AG04450 (cell line): ENCODE measurements at regions of chr1 and their contacts with region 1.

Region 1: DNA sequence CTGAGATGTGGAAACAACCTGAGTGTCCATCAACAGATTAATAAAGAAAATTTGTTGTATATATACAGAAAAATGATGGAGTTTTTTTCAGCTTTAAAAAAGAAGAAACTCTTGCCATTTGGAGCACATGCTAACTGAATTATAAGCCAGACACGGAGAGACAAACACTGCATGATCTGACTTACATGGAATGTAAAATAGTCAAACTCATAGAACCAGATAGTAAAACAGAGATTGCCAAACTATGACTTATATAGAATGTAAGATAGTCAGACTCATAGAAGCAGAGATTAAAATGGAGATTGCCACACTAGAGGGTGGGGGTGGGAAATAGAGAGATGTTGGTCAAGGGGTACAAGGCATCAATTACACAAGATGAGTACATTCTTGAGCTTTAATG is 1786.6 kb downstream of the PLA2G4A start:
- DNase-seq: peak; percentile 8
- H3K4me3 ChIP-seq: no peak overlapping the region
- H3K27ac ChIP-seq: no peak overlapping the region
- H3K27me3 ChIP-seq: no peaks in the 10 kb centered on the region
- CTCF ChIP-seq: no peak

Region 2: DNA sequence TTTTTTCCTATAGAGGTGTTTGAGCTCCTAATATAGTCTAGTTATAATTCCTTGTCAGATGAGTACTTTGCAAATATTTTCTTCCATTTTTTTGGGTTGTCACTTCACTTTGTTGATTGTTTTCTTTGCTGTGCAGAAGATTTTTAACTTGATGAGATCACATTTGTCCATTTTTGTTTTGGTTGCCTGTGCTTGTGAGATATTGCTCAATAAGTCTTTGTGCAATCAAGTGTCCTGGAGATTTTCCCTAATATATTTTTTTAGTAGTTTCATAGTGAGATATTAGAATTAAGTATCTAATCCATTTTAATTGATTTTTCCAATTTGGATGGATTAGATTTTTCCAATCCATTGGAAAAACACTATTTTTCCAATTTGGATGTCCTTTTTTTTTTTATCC is 391.1 kb before region 1 on chr1:
- CTCF ChIA-PET with region 1: no interaction called
- POLR2A ChIA-PET with region 1: interaction called, 13 read pairs
- DNase-seq: no peak
- H3K4me3 ChIP-seq: no peak overlapping the region
- H3K27ac ChIP-seq: no peak overlapping the region
- H3K27me3 ChIP-seq: no peaks in the 10 kb centered on the region
- CTCF ChIP-seq: no peak

Region 3: DNA sequence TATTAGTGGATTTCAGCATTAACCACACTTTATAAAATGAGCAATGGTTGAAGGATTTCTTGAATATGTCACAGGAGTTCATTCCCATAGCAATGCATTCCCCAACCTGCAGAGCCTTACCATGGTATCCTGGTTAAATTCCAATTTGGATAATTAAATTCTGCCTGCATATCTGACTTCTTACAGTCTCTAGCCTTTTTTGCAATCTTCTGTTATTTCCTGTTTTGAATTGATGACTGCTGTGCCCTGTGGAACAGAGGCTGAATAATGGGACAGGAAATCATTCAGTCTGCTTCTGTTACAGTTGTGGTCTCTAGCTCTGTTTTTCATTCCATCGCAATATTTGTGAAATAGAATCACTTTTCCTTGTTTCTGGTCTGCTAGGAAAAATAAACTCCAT is 37.4 kb after region 1 on chr1:
- CTCF ChIA-PET with region 1: no interaction called
- POLR2A ChIA-PET with region 1: no interaction called
- DNase-seq: peak; percentile 8
- H3K4me3 ChIP-seq: no peak overlapping the region
- H3K27ac ChIP-seq: no peak overlapping the region
- H3K27me3 ChIP-seq: no peaks in the 10 kb centered on the region
- CTCF ChIP-seq: no peak

Region 4: DNA sequence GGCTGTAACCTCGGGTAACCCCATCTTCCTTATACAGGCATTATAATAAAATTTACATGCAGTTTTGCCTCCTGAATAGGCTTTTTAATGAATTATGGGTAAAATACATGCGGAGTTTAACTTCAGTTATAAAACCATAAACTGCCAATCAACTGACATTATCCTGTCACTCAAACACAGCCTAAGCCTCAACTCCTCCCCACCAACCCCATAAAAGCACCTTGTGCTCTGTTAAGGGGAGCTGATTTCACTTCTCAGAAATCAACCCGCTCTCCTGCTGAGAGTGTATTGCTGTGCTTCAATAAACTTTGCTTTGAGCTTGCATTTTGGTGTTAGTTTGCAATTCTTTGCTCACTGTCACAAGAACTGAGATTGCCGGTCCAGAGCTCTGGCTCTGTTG is 50.2 kb after region 1 on chr1:
- CTCF ChIA-PET with region 1: no interaction called
- POLR2A ChIA-PET with region 1: no interaction called
- DNase-seq: no peak
- H3K4me3 ChIP-seq: no peak overlapping the region
- H3K27ac ChIP-seq: no peak overlapping the region
- H3K27me3 ChIP-seq: no peaks in the 10 kb centered on the region
- CTCF ChIP-seq: no peak